GM13977 (cell line): ENCODE measurements at regions of chr18 and their contacts with region 1.

Region 1: DNA sequence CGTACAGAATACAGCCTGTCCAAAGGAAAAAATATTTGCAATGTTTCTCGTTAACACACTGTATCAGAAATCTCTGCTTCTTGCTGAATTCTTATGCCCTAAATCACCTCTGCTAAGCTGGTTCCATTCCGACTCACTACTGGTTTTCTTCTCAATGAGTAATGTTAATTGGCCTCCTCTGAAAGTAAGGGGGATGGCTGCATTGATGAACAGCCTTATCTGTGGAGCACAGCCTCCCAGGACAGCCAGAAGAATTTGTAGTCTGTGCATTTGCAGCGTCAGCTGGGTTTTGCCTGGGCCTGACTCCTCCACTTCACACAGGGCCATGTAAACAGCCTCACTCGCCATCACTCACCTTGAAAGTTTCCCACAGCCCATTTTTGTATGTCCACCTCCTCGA is 127.7 kb downstream of the RNF152 start:
- DNase-seq: no peak
- CTCF ChIP-seq: no peak

Region 2: DNA sequence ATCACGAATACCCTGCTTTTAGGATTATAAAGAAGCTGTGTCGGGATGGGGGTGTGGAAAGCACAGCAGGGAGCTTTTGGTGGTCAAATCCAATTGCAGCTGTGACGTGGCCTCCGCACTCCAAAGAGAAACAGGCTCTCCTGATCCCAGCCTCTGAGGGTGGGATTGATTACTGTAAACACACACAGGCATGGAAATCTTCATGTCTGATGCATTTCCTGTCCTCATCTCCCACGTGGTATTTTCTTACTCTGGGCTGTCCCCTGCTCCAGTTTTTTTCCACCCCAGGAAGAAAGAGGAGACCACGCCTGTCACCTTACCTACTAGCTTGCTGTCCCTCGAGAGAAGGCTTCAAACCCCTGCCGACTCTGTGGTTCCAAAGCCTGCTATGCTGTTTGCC is 105.1 kb after region 1 on chr18:
- in situ Hi-C with region 1: loop called (anchors 25 kb)
- DNase-seq: no peak
- CTCF ChIP-seq: no peak